GM10248 (cell line): ENCODE measurements at regions of chr19 and their contacts with region 1.

Region 1: DNA sequence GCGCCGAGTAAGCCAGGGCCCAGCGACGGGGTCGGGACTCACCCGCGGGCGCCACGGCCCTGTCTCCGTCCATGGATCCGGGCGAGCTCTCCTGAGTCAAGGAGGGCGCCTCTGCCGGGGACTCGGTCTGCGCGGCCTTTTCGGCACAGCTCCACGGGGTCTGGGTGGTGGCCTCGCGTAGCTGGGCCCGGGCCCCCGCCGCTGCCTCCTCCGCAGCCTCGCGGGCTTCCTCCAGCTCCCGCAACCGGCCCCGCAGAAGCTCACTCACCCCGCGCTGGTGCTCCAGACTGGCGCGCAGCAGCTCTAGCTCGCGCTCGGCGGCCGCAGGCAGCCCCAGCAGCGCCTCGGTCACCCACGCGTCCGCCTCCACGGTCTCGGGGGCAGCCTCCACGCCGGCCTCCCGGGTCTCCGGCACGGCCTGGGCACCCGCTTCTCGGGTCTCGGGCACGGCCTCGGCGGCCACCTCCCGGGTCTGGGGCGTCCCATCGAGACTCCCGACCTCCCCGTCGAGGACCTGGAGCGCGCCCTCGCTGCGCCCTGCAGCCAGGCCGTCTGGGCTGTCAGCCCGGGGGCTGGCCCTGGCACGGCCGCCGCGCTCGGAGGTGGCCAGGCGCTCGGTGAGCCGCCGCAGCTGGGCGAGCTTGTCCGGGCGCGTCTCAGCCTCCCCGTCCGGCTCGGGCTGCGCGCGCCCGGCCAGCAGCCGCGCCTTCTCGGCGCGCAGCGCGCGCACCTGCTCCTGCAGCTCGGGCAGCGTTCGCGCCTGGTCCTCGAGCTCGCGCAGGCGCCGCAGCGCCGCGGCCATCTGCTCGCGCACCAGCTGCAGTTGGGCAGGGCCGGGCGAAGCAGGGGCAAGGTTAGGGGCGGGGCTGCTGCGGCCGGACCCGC is 8.4 kb downstream of the KANK3 start:
- DNase-seq: peak; percentile 62
- CTCF ChIP-seq: no peak

Region 2: DNA sequence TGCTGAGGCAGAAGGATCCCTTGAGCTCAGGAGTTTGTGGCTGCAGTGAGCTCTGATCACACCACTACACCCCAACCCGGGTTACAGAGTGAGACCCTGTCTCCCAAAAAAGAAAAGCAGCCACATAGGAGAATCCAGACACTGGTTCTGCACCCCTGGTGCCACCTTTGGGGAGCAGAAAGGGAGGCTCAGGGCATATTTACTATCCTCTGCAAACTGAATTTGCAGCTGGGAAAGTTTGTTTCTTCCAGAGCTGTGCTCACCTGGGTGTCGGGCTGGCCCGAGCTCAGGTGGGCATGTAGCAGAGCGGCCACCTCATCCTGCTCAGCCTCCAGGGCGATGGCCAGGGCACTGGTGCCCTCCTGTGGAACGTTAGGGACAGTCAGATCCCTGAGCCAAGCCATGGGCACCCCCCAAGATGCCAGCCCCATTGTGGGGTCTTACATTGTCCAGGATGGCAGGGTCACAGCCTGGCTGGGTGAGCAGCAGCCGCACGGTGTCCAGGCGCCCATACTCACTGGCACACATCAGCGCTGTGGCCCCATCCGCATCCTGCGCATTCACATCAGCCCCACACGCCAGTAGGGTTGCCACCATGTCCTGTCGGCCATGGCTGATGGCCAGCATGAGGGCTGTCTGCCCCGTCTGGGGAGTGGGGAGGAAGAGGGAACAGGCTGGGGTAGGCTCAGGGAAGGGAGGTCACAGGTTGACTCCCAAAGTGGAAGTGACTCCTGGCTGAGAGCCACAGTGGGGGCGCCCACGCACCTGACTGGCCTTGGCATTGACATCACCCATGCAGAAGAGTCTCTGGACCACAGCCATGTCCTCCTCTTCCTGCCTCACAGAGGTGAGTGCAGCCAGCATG is 10.3 kb before region 1 on chr19:
- CTCF ChIA-PET with region 1: interaction called, 4 read pairs
- POLR2A ChIA-PET with region 1: interaction called, 16 read pairs
- DNase-seq: no peak
- CTCF ChIP-seq: no peak

Region 3: GRCh38 chr19:8552810-8553209 is 218.1 kb after region 1 on chr19:
- CTCF ChIA-PET with region 1: no interaction called
- POLR2A ChIA-PET with region 1: no interaction called
- DNase-seq: no peak
- CTCF ChIP-seq: no peak